ENCODE measurements at regions of chr5 and their contacts with region 1.

Region 1: GRCh38 chr5:95822542-95823181 is at the start of gene GLRX:
- DNase-seq: peak; percentile 81 to 88
- ATAC-seq: peak; percentile 77 to 87
- H3K4me3 ChIP-seq: peak within 1 kb of the TSS; percentile 89
- H3K27ac ChIP-seq: peak within 1 kb of the TSS; percentile 87 to 94
- H3K4me1 ChIP-seq: peaks cover 55% of the 10 kb centered on the region
- CTCF ChIP-seq: no peak
- EP300 ChIP-seq: no peak
- POLR2A ChIP-seq: peak; percentile 78
- RAD21 ChIP-seq: no peak; a peak in 1 of 5 replicates
- polyA plus RNA-seq, gene GLRX: 329 and 381 TPM in 2 replicates

Region 2: GRCh38 chr5:95808686-95809413 is 13.8 kb before region 1 on chr5:
- CTCF ChIA-PET with region 1: interaction called, 10 read pairs
- POLR2A ChIA-PET with region 1: interaction called, 7 read pairs
- DNase-seq: no peak
- ATAC-seq: no peak
- H3K4me3 ChIP-seq: no peak overlapping the region
- H3K27ac ChIP-seq: peak overlapping the region; percentile 70 to 75
- H3K4me1 ChIP-seq: peaks cover 67% of the 10 kb centered on the region
- CTCF ChIP-seq: no peak
- EP300 ChIP-seq: no peak
- POLR2A ChIP-seq: no peak
- RAD21 ChIP-seq: no peak

Region 3: GRCh38 chr5:95835682-95836385 is 13.2 kb after region 1 on chr5:
- CTCF ChIA-PET with region 1: interaction called, 8 read pairs
- POLR2A ChIA-PET with region 1: interaction called, 71 read pairs
- DNase-seq: no peak
- ATAC-seq: no peak
- H3K4me3 ChIP-seq: peak overlapping the region; percentile 49
- H3K27ac ChIP-seq: peak overlapping the region; percentile 97 to 100
- H3K4me1 ChIP-seq: peaks cover 39% of the 10 kb centered on the region
- CTCF ChIP-seq: no peak
- EP300 ChIP-seq: no peak
- POLR2A ChIP-seq: no peak
- RAD21 ChIP-seq: no peak

Region 4: GRCh38 chr5:95858661-95859326 is 36.1 kb after region 1 on chr5:
- CTCF ChIA-PET with region 1: no interaction called
- POLR2A ChIA-PET with region 1: no interaction called
- DNase-seq: peak; percentile 94 to 95
- ATAC-seq: peak; percentile 93 to 94
- H3K4me3 ChIP-seq: peak overlapping the region; percentile 16
- H3K27ac ChIP-seq: peak overlapping the region; percentile 74 to 82
- H3K4me1 ChIP-seq: peaks cover 57% of the 10 kb centered on the region
- CTCF ChIP-seq: peak; percentile 95
- EP300 ChIP-seq: peak; percentile 85 to 86; a peak in 4 of 5 replicates
- POLR2A ChIP-seq: no peak
- RAD21 ChIP-seq: peak; percentile 95 to 99